Ascending aorta (tissue), 2 donors: ENCODE measurements at regions of chr9 and their contacts with region 1.

Region 1: GRCh38 chr9:130780865-130781504 is 54.1 kb upstream of the ABL1 start:
- DNase-seq: peak; percentile 53 to 92
- H3K4me3 ChIP-seq: peak overlapping the region; percentile 52 to 64
- H3K27ac ChIP-seq: peak overlapping the region; percentile 94 to 97
- H3K4me1 ChIP-seq: peaks cover 4 to 41% of the 10 kb centered on the region in 2 donors
- H3K27me3 ChIP-seq: no peaks in the 10 kb centered on the region
- CTCF ChIP-seq: no peak

Region 2: DNA sequence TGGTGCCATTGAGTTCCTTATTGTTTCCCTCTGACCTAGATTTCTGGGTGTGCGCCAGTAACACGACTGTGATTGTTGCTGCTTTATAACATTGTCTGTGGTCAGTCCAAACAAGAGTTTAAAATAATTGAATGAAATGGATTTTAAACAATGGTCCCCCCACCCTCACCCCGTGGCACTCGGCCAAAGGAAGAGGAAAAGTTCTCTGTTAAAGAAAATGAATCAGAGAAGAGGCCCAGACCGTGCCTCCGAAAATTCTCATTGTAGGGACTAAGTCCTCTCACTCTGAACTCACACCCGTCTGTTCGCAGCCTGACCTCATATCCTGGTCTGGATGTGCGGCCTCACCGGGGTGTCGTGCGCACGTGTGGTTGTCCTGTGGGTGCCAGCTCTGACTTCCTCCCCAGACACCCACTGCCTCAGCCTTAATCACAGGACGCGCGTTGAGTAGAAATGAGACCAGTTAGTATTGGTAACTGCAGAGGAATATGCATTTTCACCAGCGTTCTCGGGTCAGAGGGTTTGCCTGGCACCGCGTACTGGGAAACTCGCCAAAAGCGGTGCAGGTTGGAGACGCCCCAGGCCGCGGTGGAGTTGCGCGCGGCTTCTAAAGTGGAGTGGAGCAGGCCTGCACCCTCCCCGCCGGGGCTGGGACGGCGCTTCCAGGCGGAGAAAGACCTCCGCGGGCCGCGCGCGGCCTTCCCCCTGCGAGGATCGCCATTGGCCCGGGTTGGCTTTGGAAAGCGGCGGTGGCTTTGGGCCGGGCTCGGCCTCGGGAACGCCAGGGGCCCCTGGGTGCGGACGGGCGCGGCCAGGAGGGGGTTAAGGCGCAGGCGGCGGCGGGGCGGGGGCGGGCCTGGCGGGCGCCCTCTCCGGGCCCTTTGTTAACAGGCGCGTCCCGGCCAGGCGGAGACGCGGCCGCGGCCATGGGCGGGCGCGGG is 53.7 kb after region 1 on chr9 and contains the start of gene ABL1:
- intact Hi-C with region 1: loop called (anchors 2 kb)
- DNase-seq: peak; percentile 62 to 92
- H3K4me3 ChIP-seq: peak within 1 kb of the TSS; percentile 77 to 96
- H3K27ac ChIP-seq: peak within 1 kb of the TSS; percentile 95 to 98
- H3K4me1 ChIP-seq: peaks cover 12 to 26% of the 10 kb centered on the region in 2 donors
- H3K27me3 ChIP-seq: no peaks in the 10 kb centered on the region
- CTCF ChIP-seq: no peak
- total RNA-seq, gene ABL1: 99.1 TPM